ENCODE measurements at regions of chr4 and their contacts with region 1.

Region 1: GRCh38 chr4:78149751-78150542 is 92.8 kb downstream of the FRAS1 start:
- DNase-seq: no peak
- ATAC-seq: peak; percentile 69
- H3K4me3 ChIP-seq: peak overlapping the region; percentile 25 to 39 (median 36); a peak in 5 of 6 replicates
- H3K27ac ChIP-seq: peak overlapping the region; percentile 79
- H3K4me1 ChIP-seq: peaks cover 84% of the 10 kb centered on the region
- H3K27me3 ChIP-seq: no peaks in the 10 kb centered on the region
- CTCF ChIP-seq: no peak
- EP300 ChIP-seq: no peak
- POLR2A ChIP-seq: no peak
- RAD21 ChIP-seq: no peak

Region 2: GRCh38 chr4:78137532-78137931 is 12.4 kb before region 1 on chr4:
- CTCF ChIA-PET with region 1: no interaction called
- POLR2A ChIA-PET with region 1: interaction called, 12 read pairs
- in situ Hi-C with region 1: no loop called
- intact Hi-C with region 1: loop called (anchors 2 kb)
- DNase-seq: no peak
- ATAC-seq: no peak
- H3K4me3 ChIP-seq: no peak overlapping the region
- H3K27ac ChIP-seq: peak overlapping the region; percentile 92
- H3K4me1 ChIP-seq: peaks cover 72% of the 10 kb centered on the region
- H3K27me3 ChIP-seq: no peaks in the 10 kb centered on the region
- CTCF ChIP-seq: no peak
- EP300 ChIP-seq: no peak
- POLR2A ChIP-seq: no peak
- RAD21 ChIP-seq: no peak

Region 3: DNA sequence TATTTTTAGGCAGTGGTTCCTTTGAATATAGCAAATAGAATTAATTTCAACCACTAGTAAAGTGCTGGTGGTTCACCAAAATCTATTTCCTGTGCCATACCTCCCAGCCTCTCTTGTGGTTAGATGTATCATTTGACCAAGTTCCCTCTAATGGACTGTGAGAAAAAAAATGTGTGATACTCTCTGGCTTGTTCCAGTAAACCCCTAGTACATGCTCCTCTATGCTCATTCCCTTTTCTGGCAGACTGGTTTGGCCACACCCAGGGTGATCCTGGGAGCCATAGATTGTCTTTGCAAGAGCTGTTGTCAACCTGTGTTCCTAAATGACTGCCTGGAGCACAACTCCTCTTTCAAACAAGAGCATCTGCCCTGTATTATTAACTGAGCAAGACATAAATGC is 16.7 kb after region 1 on chr4:
- CTCF ChIA-PET with region 1: no interaction called
- POLR2A ChIA-PET with region 1: interaction called, 7 read pairs
- in situ Hi-C with region 1: no loop called
- intact Hi-C with region 1: loop called (anchors 2 kb)
- DNase-seq: no peak
- ATAC-seq: no peak
- H3K4me3 ChIP-seq: no peak overlapping the region
- H3K27ac ChIP-seq: peak overlapping the region; percentile 82
- H3K4me1 ChIP-seq: peaks cover 69% of the 10 kb centered on the region
- H3K27me3 ChIP-seq: no peaks in the 10 kb centered on the region
- CTCF ChIP-seq: no peak
- EP300 ChIP-seq: no peak
- POLR2A ChIP-seq: no peak
- RAD21 ChIP-seq: no peak